ENCODE measurements at regions of chr19 and their contacts with region 1.

Region 1: GRCh38 chr19:48618916-48619691 is at the starts of genes RPL18 and SPHK2:
- DNase-seq: peak; percentile 89 to 99 (median 95)
- ATAC-seq: peak; percentile 67
- H3K4me3 ChIP-seq: peak within 1 kb of the TSS; percentile 94
- H3K4me3 Mint-ChIP-seq: peak within 1 kb of the TSS; percentile 98
- H3K27ac ChIP-seq: peak within 1 kb of the TSS; percentile 76 to 89
- H3K27ac Mint-ChIP-seq: peak within 1 kb of the TSS; percentile 97
- H3K4me1 ChIP-seq: peaks cover 64% of the 10 kb centered on the region
- H3K4me1 Mint-ChIP-seq: peaks cover 58% of the 10 kb centered on the region
- H3K27me3 ChIP-seq: no peaks in the 10 kb centered on the region
- H3K27me3 Mint-ChIP-seq: no peaks in the 10 kb centered on the region
- CTCF ChIP-seq: no peak
- total RNA-seq, gene RPL18: 2,820 to 2,913 TPM
- total RNA-seq, gene SPHK2: 14.1 to 15.3 TPM

Region 2: DNA sequence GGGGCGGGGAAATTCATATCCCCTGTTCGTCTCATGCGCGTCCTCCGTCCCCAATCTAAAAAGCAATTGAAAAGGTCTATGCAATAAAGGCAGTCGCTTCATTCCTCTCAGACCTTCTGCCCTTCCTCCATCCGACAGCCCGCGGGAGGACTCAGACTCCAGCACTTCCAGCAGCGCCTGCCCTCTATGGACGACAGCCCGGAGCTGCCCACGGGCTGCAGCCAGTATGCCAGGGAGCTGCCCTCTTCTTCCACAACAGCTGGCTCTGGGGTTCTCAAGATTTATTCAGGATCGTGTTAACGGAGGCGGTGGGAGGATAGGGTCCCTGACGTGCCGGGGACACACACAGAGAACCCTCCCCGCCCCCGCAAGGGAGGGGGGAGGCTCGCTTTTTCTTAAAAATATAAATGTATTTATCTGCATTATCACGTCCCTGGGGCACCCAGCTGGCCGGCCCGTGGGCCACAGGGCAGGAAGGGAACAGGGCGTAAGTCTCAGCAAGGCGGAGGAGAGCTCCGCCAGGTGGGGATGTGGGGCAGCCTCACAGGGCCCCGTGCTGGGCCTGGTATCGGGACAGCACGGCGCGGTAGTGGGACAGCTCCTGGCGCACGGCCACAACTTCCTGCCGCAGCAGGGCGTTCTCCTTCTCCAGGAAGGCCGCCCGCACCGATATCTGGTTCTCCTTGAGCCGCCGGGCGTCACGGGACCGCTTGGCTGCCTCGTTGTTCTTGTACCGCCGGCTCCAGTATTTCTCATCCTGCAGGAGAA is 11.4 kb after region 1 on chr19:
- CTCF ChIA-PET with region 1: interaction called, 3 read pairs
- POLR2A ChIA-PET with region 1: interaction called, 45 read pairs
- intact Hi-C with region 1: loop called in 1 of 2 experiments (anchors 1 kb)
- DNase-seq: peak in 1 of 14 experiments; percentile 44
- ATAC-seq: no peak
- H3K4me3 ChIP-seq: no peak overlapping the region
- H3K4me3 Mint-ChIP-seq: no peak overlapping the region
- H3K27ac ChIP-seq: no peak overlapping the region
- H3K27ac Mint-ChIP-seq: peak overlapping the region; percentile 73
- H3K4me1 ChIP-seq: peaks cover 50% of the 10 kb centered on the region
- H3K4me1 Mint-ChIP-seq: peaks cover 39% of the 10 kb centered on the region
- H3K27me3 ChIP-seq: no peaks in the 10 kb centered on the region
- H3K27me3 Mint-ChIP-seq: no peaks in the 10 kb centered on the region
- CTCF ChIP-seq: no peak